Calu3 (cell line): ENCODE measurements at regions of chr11 and their contacts with region 1.

Region 1: DNA sequence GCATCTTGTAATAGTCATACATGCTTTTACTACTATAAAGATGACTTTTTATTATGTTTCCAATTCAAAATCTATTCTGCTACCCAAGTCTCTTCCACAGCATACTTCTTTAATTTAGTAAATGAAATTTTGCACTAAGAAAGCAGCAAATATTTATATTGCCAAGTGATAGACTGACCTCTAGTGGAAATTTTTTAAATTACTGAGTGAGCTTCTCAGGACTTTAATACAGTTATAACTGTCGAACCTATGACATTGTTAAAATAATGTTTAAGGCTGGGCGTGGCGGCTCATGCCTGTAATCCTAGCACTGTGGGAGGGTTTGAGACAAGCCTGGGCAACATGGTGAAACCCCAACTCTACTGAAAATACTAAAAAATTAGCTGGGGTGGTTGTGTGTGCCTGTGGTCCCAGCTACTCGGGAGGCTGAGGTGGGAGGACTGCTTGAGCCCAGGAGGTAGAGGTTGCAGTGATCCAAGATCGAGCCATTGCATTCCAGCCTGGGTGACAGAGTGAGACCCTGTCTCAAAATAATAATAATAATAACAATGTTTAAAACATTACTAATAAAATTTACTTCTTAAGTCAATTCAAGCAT is 27.3 kb downstream of the STK33 start:
- DNase-seq: no peak
- H3K4me3 Mint-ChIP-seq: no peak overlapping the region
- H3K27ac Mint-ChIP-seq: no peak overlapping the region
- H3K4me1 Mint-ChIP-seq: no peaks in the 10 kb centered on the region
- H3K27me3 Mint-ChIP-seq: peaks cover 65% of the 10 kb centered on the region
- CTCF ChIP-seq: peak; percentile 30

Region 2: GRCh38 chr11:8006349-8006977 is 560.2 kb before region 1 on chr11:
- CTCF ChIA-PET with region 1: no interaction called
- intact Hi-C with region 1: loop called (anchors 5 kb)
- DNase-seq: peak; percentile 71
- H3K4me3 Mint-ChIP-seq: no peak overlapping the region
- H3K27ac Mint-ChIP-seq: no peak overlapping the region
- H3K4me1 Mint-ChIP-seq: no peaks in the 10 kb centered on the region
- H3K27me3 Mint-ChIP-seq: peaks cover 10% of the 10 kb centered on the region
- CTCF ChIP-seq: peak; percentile 59

Region 3: DNA sequence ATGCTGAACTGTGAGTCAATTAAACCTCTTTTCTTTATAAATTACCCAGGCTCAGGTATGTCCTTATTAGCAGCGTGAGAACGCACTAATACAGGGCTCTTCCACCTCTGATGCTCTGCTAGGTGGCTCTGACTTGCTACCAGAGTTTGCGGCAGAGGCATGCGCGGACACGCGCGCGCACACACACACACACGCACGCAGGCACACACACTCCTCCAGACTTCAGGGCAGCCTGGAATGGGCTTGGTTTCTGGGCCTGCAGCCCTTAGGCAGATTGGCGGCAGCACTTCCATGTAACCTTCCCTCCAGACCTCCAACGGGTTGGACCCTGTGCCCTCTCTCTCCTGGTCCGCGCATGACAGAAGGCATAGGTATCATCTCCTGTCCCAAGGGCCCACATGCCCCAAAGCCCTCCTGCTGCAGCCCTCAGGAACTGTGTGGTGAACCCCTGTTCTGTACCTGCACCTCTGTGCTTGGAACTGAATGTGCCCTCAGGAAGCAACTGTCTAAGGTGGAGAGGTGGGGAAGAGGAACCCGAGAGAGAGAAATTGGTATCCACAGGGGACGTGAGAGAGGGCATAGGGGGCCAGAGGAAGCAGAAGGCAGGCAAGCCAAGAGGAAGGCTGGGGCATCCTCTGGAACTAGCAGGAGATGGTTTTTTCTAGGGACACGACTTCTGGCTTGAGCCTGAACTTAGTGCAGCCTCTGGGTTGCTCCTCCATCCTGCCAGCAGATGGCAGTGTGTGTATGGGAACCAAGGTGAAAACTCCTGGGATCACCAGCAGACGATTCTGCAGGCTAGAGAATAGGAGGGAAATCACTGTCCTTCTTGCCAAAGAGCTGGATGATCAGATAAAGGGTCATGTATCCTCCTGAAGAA is 374.5 kb before region 1 on chr11:
- CTCF ChIA-PET with region 1: interaction called, 5 read pairs
- intact Hi-C with region 1: loop called (anchors 1 kb)
- DNase-seq: peak; percentile 67
- H3K4me3 Mint-ChIP-seq: no peak overlapping the region
- H3K27ac Mint-ChIP-seq: no peak overlapping the region
- H3K4me1 Mint-ChIP-seq: no peaks in the 10 kb centered on the region
- H3K27me3 Mint-ChIP-seq: peaks cover 49% of the 10 kb centered on the region
- CTCF ChIP-seq: peak; percentile 55

Region 4: DNA sequence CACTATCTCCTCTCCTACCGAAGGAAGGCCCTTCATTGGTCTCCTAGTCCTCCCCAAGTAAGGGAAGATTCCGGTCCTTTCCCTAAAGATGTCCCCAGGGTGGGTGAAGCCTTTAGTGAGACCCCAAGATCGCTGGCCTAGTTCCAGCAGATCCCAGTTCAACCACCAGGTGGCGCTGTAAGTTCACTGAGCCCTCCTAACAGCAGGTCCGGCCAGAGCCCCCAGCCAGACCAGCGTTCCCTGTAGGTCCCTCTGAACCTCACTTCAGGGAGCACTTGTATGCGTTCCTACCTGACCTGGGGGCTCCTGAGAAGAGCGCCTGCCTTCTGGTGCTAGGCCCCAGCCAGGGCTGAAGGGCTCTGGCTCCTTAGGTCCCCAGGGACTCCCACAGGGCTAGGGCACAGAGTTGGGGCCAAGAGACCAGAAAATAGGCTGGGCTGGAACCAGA is 341.1 kb before region 1 on chr11:
- CTCF ChIA-PET with region 1: interaction called, 6 read pairs
- intact Hi-C with region 1: loop called (anchors 1 kb)
- DNase-seq: peak; percentile 73
- H3K4me3 Mint-ChIP-seq: no peak overlapping the region
- H3K27ac Mint-ChIP-seq: no peak overlapping the region
- H3K4me1 Mint-ChIP-seq: no peaks in the 10 kb centered on the region
- H3K27me3 Mint-ChIP-seq: peaks cover 69% of the 10 kb centered on the region
- CTCF ChIP-seq: peak; percentile 94

Region 5: GRCh38 chr11:8247312-8247711 is 319.4 kb before region 1 on chr11:
- CTCF ChIA-PET with region 1: interaction called, 13 read pairs
- intact Hi-C with region 1: loop called (anchors 1 kb)
- DNase-seq: peak; percentile 71
- H3K4me3 Mint-ChIP-seq: no peak overlapping the region
- H3K27ac Mint-ChIP-seq: no peak overlapping the region
- H3K4me1 Mint-ChIP-seq: no peaks in the 10 kb centered on the region
- H3K27me3 Mint-ChIP-seq: peaks cover 99% of the 10 kb centered on the region
- CTCF ChIP-seq: peak; percentile 76

Region 6: GRCh38 chr11:8328848-8329330 is 237.8 kb before region 1 on chr11:
- CTCF ChIA-PET with region 1: interaction called, 4 read pairs
- intact Hi-C with region 1: loop called (anchors 2 kb)
- DNase-seq: peak; percentile 95
- H3K4me3 Mint-ChIP-seq: peak overlapping the region; percentile 20
- H3K27ac Mint-ChIP-seq: no peak overlapping the region
- H3K4me1 Mint-ChIP-seq: no peaks in the 10 kb centered on the region
- H3K27me3 Mint-ChIP-seq: peaks cover 13% of the 10 kb centered on the region
- CTCF ChIP-seq: peak; percentile 94

Region 7: DNA sequence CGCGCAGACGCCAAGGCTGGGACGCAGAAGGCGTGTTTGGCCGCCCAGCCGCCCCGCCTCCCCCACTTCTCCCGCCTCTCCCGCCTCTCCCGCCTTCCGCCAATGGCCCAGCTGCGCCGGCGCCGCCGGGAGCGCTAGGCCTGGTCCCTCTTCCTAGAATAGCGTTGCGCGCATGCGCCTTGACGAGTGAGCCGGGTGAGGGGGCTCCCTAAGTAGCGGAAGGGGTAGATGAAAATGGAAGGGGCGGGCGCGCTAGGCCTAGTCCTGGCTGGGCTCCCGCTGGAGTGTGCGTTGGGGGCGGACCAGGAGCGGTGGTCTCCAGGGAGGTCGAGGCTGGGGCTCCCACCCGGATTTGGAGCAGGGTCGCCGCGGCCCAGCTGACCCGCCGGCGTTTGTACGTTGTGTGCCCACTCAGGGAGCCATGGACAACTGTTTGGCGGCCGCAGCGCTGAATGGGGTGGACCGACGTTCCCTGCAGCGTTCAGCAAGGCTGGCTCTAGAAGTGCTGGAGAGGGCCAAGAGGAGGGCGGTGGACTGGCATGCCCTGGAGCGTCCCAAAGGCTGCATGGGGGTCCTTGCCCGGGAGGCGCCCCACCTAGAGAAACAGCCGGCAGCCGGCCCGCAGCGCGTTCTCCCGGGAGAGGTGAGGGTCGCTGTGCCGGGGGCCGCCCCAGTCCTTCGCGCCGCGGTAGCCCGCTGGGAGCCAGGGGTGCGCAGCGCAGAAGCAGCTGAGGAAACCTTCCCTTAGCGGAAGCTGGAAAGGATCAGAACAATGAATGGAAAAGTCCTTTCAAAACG is 344.5 kb after region 1 on chr11 and contains the start of gene AKIP1:
- CTCF ChIA-PET with region 1: no interaction called
- intact Hi-C with region 1: no loop called
- DNase-seq: peak; percentile 93
- H3K4me3 Mint-ChIP-seq: peak within 1 kb of the TSS; percentile 85
- H3K27ac Mint-ChIP-seq: peak within 1 kb of the TSS; percentile 32
- H3K4me1 Mint-ChIP-seq: peaks cover 30% of the 10 kb centered on the region
- H3K27me3 Mint-ChIP-seq: no peaks in the 10 kb centered on the region
- CTCF ChIP-seq: no peak
- total RNA-seq, gene AKIP1: 23.0 and 26.8 TPM in 2 replicates